ENCODE measurements at regions of chr7 and their contacts with region 1.

Region 1: GRCh38 chr7:28813243-28813962 is 144.7 kb downstream of the TRIL start:
- DNase-seq: no peak
- H3K4me3 ChIP-seq: no peak overlapping the region
- H3K27ac ChIP-seq: no peak overlapping the region
- H3K4me1 ChIP-seq: no peaks in the 10 kb centered on the region
- H3K27me3 ChIP-seq: no peaks in the 10 kb centered on the region
- CTCF ChIP-seq: no peak
- POLR2A ChIP-seq: no peak

Region 2: GRCh38 chr7:28002638-28003037 is 810.8 kb before region 1 on chr7:
- intact Hi-C with region 1: no loop called
- DNase-seq: no peak
- H3K4me3 ChIP-seq: no peak overlapping the region
- H3K27ac ChIP-seq: no peak overlapping the region
- H3K4me1 ChIP-seq: peaks cover 44% of the 10 kb centered on the region
- H3K27me3 ChIP-seq: no peaks in the 10 kb centered on the region
- CTCF ChIP-seq: no peak
- POLR2A ChIP-seq: no peak

Region 3: DNA sequence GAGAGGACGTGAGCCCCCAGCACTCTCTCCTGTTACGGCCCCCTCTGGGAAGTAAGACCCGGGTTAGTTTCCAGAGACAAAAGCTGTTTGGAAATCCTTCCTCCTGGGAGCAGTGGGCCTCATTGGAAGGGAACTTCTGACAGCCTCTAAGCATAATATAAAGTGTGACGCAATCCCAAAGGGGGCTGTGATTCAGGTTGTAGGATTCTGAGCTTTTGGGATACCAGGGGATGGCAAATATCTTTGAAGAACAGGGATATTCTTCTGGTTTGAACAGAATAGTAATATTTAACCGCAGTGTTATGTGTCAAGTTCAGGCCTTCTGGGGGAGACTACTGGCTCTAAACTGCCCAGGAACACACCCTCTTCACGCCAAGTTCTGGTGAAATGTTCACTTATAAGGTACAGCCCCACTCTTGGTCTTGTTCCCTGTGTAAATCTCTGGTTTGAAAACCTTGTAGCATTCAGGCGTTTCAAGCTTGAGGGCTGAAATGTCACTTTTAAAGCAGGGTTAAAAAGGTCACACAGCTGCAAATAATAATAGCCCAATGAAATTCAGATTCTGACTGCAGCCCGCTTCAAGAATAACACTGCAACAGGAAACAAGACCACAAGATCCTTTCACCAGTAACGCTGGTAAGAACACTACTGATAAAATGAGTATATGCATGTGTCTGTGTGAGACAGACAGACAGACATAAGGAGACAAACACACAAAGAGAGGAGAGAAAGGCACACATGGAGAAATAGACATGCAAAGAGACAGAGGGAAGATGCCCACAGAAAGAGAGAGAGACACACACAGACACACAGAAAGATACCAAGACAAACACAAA is 332.1 kb before region 1 on chr7:
- intact Hi-C with region 1: no loop called
- DNase-seq: no peak
- H3K4me3 ChIP-seq: no peak overlapping the region
- H3K27ac ChIP-seq: no peak overlapping the region
- H3K4me1 ChIP-seq: no peaks in the 10 kb centered on the region
- H3K27me3 ChIP-seq: no peaks in the 10 kb centered on the region
- CTCF ChIP-seq: no peak
- POLR2A ChIP-seq: no peak

Region 4: DNA sequence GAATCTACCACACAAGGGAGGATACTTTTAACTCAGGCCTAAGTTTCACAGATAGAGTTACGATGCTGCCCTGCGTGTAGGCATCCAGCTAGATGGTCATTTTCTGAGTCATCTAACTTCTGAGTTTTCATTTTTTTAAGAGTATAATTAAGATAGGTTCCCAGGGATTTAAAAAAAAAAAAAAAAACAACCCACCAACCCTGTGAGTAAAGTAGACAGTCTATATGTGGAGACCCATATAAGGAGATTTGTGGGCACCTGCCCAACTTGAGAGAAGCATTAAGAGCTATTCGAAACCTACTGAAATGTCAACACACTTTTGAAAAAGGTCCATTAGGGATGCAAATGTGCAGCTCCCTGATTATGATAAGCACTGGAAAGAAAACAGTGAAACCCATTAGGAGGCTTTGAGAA is 112.6 kb before region 1 on chr7:
- intact Hi-C with region 1: loop called (anchors 5 kb)
- DNase-seq: no peak
- H3K4me3 ChIP-seq: no peak overlapping the region
- H3K27ac ChIP-seq: no peak overlapping the region
- H3K4me1 ChIP-seq: peaks cover 17% of the 10 kb centered on the region
- H3K27me3 ChIP-seq: no peaks in the 10 kb centered on the region
- CTCF ChIP-seq: no peak
- POLR2A ChIP-seq: no peak

Region 5: DNA sequence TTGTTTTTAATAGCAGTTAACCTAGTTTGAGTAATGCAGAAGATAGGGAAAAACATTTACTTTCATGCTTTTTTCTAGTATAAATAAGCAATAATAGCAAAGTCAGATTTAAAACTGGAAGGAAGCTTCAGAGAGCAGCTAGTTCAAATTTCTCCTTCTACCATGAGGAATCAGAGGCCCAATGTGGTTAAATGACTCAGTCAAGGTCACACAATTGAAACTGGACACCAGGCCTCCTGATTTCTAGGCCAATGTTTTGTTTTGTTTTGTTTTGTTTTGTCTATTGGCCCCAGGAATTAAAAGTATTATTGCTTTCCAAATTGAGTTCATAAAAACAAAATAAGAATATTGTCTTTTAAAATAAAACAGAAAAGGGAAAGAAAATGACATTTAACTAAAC is 22.4 kb after region 1 on chr7:
- intact Hi-C with region 1: no loop called
- DNase-seq: no peak
- H3K4me3 ChIP-seq: no peak overlapping the region
- H3K27ac ChIP-seq: no peak overlapping the region
- H3K4me1 ChIP-seq: no peaks in the 10 kb centered on the region
- H3K27me3 ChIP-seq: no peaks in the 10 kb centered on the region
- CTCF ChIP-seq: no peak
- POLR2A ChIP-seq: no peak